ENCODE measurements at regions of chr18 and their contacts with region 1.

Region 1: DNA sequence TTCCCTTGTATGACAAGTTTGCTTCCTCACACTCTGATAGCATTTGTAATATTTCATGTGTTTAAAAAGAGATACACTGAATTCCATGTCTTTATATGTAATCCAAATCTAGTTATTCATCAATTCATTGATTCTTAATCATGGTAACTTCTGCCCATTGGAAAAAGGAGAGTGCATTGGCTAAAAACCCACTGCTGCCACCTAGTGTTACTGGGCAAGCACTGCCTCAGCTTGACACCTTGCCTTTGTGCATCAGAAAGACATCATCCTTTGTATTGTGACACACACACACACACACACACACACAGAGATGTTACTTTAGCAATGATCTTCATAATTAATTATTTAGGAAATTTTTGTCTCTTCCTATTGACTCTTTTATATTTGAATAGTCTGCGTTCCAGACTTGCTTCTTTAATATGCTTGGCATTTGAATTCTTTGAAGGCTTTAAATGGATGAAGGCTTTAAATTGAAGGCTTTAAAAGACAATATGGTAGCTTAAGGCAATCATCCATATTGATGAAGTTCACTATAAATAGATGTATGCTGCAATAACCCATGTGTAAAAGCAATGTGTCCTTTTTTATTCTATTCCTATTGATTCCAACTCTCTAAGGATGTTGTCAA is 414.2 kb upstream of the CHST9 start:
- DNase-seq: peak; percentile 19
- CTCF ChIP-seq: peak; percentile 87

Region 2: DNA sequence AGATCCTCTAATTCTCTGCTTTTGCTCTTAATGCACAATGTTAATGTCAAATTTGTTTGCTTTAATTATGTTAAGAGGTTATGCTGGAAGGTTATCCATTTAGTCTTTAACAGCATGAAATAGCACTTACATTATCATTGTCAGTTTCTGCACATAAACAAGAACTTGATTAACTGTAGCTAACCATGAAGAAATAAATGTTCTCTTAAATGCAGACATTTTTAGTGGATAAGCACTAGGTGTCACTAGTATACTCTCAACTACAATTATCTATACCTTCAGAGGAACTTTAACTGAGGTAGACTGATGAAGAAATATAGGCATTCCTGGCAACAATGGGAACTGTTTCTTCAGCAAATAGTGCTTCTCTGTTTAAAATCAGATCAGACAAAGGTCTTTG is 235.4 kb before region 1 on chr18:
- in situ Hi-C with region 1: loop called (anchors 25 kb)
- DNase-seq: peak; percentile 9
- CTCF ChIP-seq: peak; percentile 36

Region 3: GRCh38 chr18:27382567-27383216 is 216.6 kb before region 1 on chr18:
- in situ Hi-C with region 1: no loop called
- DNase-seq: no peak
- CTCF ChIP-seq: no peak

Region 4: GRCh38 chr18:27428120-27428519 is 171.2 kb before region 1 on chr18:
- in situ Hi-C with region 1: no loop called
- DNase-seq: no peak
- CTCF ChIP-seq: no peak

Region 5: GRCh38 chr18:28781616-28782362 is 1182.5 kb after region 1 on chr18:
- in situ Hi-C with region 1: no loop called
- DNase-seq: no peak
- CTCF ChIP-seq: no peak